Dorsolateral prefrontal cortex (tissue), 120 donors: ENCODE measurements at regions of chr17 and their contacts with region 1.

Region 1: GRCh38 chr17:10844621-10845387 is 6.9 kb upstream of the PIRT start:
- DNase-seq: peak in 9 of 10 donors; percentile 14 to 76 (median 52)
- H3K4me3 ChIP-seq: peak overlapping the region in 58 of 59 donors; percentile 21 to 65 (median 48)
- H3K27ac ChIP-seq: peak overlapping the region in 17 of 59 donors; percentile 10 to 76 (median 33)
- H3K27me3 ChIP-seq: no peaks in the 10 kb centered on the region
- CTCF ChIP-seq: peak; percentile 85 to 99 (median 93)

Region 2: DNA sequence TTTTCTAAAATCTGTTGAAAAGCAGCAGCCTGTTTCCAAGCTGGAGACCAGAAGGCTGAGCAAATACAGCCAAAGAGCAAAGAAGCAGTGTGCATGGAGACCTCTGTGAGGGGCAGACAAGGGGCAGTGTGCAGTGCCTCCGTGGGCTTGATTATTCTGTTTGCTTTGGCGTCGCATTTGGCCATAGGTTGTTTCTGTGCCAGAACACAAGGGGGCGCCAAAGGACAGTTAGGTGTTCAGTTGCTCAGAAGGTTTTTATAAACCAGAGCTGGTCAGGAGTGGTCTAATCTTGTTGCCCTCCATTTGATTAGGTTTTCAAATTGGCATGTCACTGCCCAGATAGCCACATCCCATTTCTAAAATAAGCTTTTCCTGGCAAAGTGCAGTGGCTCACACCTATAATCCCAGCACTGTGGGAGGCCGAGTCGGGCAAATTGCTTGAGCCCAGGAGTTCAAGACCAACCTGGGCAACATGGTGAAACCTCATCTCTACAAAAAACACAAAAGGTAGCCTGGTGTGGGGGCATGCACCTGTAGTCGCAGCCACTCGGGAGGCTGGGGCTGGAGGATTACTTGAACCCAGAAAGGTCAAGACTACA is 198.3 kb before region 1 on chr17:
- intact Hi-C with region 1: loop called (anchors 5 to 10 kb)
- DNase-seq: peak; percentile 43 to 76 (median 66)
- H3K4me3 ChIP-seq: no peak overlapping the region
- H3K27ac ChIP-seq: no peak overlapping the region
- H3K27me3 ChIP-seq: no peaks in the 10 kb centered on the region
- CTCF ChIP-seq: peak; percentile 65 to 91 (median 84)

Region 3: DNA sequence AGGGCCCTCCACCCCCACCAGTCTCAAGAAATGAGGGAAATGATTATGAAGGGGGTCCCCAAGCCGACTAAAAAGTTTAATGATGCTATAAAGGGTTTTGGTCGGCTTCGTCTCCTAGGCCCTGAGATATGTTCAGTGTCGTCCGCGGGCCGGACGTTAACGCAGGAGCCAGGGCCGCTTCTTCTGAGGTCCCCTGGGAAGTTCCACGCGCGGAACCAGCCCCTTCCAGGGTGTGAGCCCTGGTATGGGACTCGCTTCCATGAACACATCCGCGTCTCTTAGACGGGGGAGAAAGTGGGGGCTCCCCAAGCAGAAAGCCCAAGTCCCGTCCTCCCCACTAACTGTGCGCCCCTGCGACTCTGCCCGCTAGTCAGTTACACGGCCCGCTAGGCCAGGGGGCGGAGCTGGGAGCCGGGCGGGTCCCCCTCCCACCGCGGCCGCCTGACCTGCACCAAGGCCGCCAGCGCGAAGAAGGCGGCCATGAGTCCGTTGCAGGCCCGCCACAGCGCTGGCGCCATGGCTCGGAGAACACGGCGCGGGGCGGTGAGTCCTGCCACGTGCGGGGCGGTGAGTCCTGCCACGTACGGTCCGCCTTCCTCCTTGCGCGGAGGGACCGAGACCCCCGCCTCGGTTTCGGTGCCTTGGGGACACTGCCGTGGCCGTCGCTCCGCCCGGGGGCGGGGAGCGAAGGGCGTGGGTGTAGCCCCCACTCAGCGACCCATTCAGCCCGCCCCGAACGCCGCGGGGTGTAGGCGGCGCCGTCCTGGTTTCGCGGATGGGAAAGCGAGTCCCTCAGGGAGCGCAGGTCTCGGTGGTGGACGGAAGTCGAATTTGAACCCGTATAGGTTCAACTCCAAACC is 115.2 kb before region 1 on chr17 and contains the start of gene TMEM220:
- intact Hi-C with region 1: loop called in 1 of 2 experiments (anchors 5 kb)
- DNase-seq: peak in 9 of 10 donors; percentile 16 to 80 (median 53)
- H3K4me3 ChIP-seq: peak within 1 kb of the TSS; percentile 49 to 88 (median 76)
- H3K27ac ChIP-seq: peak within 1 kb of the TSS in 55 of 59 donors; percentile 21 to 95 (median 83)
- H3K27me3 ChIP-seq: no peaks in the 10 kb centered on the region
- CTCF ChIP-seq: peak in 10 of 56 donors; percentile 5 to 36 (median 14)
- total RNA-seq, gene TMEM220: 0.47 to 11.5 (median 3.9) TPM

Region 4: GRCh38 chr17:10737168-10737622 is 107.6 kb before region 1 on chr17:
- intact Hi-C with region 1: loop called in 1 of 2 experiments (anchors 2 kb)
- DNase-seq: peak in 8 of 10 donors; percentile 21 to 62 (median 53)
- H3K4me3 ChIP-seq: no peak overlapping the region
- H3K27ac ChIP-seq: no peak overlapping the region
- H3K27me3 ChIP-seq: peaks cover 0 to 3% (median 0%) of the 10 kb centered on the region in 45 donors
- CTCF ChIP-seq: peak; percentile 48 to 92 (median 78)